Activated CD4-positive, alpha-beta memory T cell treated with anti-CD3 and anti-CD28 coated beads, Interleukin-2, amount 10 ng/mL, durations not matched to agents 7 days and 5 days (primary cell): ENCODE measurements at regions of chr11 and their contacts with region 1.

Region 1: GRCh38 chr11:43311791-43312607 is at the start of gene API5:
- DNase-seq: peak; percentile 94
- H3K4me3 Mint-ChIP-seq: peak within 1 kb of the TSS; percentile 91
- H3K27ac Mint-ChIP-seq: peak within 1 kb of the TSS; percentile 84
- H3K4me1 Mint-ChIP-seq: peaks cover 44% of the 10 kb centered on the region
- H3K27me3 Mint-ChIP-seq: no peaks in the 10 kb centered on the region
- total RNA-seq, gene API5: 98.0 to 103 TPM

Region 2: GRCh38 chr11:43376594-43376993 is 64.6 kb after region 1 on chr11:
- CTCF ChIA-PET with region 1: no interaction called
- POLR2A ChIA-PET with region 1: no interaction called
- DNase-seq: no peak
- H3K4me3 Mint-ChIP-seq: no peak overlapping the region
- H3K27ac Mint-ChIP-seq: no peak overlapping the region
- H3K4me1 Mint-ChIP-seq: peaks cover 12% of the 10 kb centered on the region
- H3K27me3 Mint-ChIP-seq: no peaks in the 10 kb centered on the region

Region 3: GRCh38 chr11:43419460-43419859 is 107.5 kb after region 1 on chr11:
- CTCF ChIA-PET with region 1: interaction called, 43 read pairs
- POLR2A ChIA-PET with region 1: interaction called, 14 read pairs
- DNase-seq: peak; percentile 46
- H3K4me3 Mint-ChIP-seq: no peak overlapping the region
- H3K27ac Mint-ChIP-seq: no peak overlapping the region
- H3K4me1 Mint-ChIP-seq: peaks cover 4% of the 10 kb centered on the region
- H3K27me3 Mint-ChIP-seq: no peaks in the 10 kb centered on the region